PC-9 (cell line): ENCODE measurements at regions of chr1 and their contacts with region 1.

Region 1: GRCh38 chr1:17250601-17251000 is 1.7 kb downstream of the PADI3 start:
- DNase-seq: peak; percentile 90 to 97
- H3K4me3 ChIP-seq: no peak overlapping the region
- H3K27ac ChIP-seq: peak overlapping the region; percentile 93
- H3K4me1 ChIP-seq: peaks cover 54% of the 10 kb centered on the region
- H3K27me3 ChIP-seq: no peaks in the 10 kb centered on the region
- CTCF ChIP-seq: no peak

Region 2: DNA sequence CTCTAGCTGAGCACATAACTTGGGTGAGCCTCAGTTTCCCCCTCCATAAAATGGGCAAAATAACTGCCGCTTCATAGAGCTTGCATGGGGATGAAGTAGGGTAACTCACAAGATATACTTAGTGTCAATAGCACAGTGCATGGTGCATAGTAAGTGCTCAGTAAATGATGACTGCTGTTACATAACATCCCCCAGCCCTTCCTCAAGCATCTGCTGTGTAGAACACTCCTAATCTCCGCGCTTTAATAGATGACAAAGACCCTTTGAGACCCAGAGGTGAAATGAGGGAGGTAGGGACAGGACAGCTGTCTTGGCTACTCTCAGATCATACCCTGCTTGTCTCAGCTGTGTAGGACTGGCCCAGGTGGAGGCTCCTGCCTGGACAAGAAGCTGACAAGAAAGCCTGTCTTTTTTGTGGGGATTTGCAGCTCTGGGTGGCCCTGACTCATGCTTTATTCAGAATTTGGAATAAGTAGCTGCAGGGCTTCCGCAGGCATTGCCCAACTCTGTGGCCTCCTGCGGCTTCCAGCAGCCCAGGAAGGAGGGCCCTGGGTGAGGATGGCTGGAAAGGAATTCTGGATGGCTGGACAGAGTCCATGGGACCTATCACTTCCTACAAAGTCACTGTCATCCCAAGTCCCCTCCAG is 36.7 kb after region 1 on chr1:
- CTCF ChIA-PET with region 1: no interaction called
- POLR2A ChIA-PET with region 1: no interaction called
- intact Hi-C with region 1: loop called (anchors 5 kb)
- DNase-seq: peak; percentile 78 to 92
- H3K4me3 ChIP-seq: no peak overlapping the region
- H3K27ac ChIP-seq: peak overlapping the region; percentile 25; the same call in 1 of the 2 replicates
- H3K4me1 ChIP-seq: peaks cover 48% of the 10 kb centered on the region
- H3K27me3 ChIP-seq: no peaks in the 10 kb centered on the region
- CTCF ChIP-seq: no peak